Activated CD4-positive, alpha-beta T cell treated with anti-CD3 and anti-CD28 coated beads, Interleukin-2, amount 10 ng/mL, durations not matched to agents 7 days and 5 days (primary cell): ENCODE measurements at regions of chr5 and their contacts with region 1.

Region 1: GRCh38 chr5:62284946-62285891 is 20.8 kb upstream of the KIF2A start:
- DNase-seq: peak; percentile 49
- H3K4me3 Mint-ChIP-seq: no peak overlapping the region
- H3K27ac Mint-ChIP-seq: peak overlapping the region; percentile 90
- H3K4me1 Mint-ChIP-seq: peaks cover 69% of the 10 kb centered on the region
- H3K27me3 Mint-ChIP-seq: no peaks in the 10 kb centered on the region

Region 2: GRCh38 chr5:62167561-62168070 is 117.6 kb before region 1 on chr5:
- CTCF ChIA-PET with region 1: no interaction called
- POLR2A ChIA-PET with region 1: no interaction called
- DNase-seq: no peak
- H3K4me3 Mint-ChIP-seq: no peak overlapping the region
- H3K27ac Mint-ChIP-seq: no peak overlapping the region
- H3K4me1 Mint-ChIP-seq: no peaks in the 10 kb centered on the region
- H3K27me3 Mint-ChIP-seq: peaks cover 2% of the 10 kb centered on the region

Region 3: GRCh38 chr5:62273687-62274086 is 11.5 kb before region 1 on chr5:
- CTCF ChIA-PET with region 1: interaction called, 12 read pairs
- POLR2A ChIA-PET with region 1: no interaction called
- DNase-seq: no peak
- H3K4me3 Mint-ChIP-seq: no peak overlapping the region
- H3K27ac Mint-ChIP-seq: no peak overlapping the region
- H3K4me1 Mint-ChIP-seq: peaks cover 31% of the 10 kb centered on the region
- H3K27me3 Mint-ChIP-seq: no peaks in the 10 kb centered on the region

Region 4: DNA sequence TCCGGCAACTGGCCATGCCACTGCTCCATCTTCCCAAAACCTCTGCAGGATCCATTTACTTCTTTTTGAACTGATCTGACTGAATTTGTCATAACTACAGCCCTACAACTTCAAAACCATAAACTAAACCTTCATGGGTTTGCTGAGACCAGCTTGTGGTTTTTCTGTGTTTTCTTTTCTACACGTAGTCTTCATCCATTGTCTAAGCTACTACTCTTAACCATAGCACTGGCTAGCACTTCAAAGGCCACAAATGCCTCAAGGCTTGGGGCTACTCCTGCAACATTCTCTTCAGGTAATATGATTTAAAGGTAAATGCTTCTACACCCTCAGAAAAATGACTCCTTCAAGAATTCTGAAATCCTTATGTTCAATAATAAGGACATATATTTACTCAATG is 11.8 kb after region 1 on chr5:
- CTCF ChIA-PET with region 1: interaction called, 27 read pairs
- POLR2A ChIA-PET with region 1: interaction called, 6 read pairs
- DNase-seq: peak; percentile 53
- H3K4me3 Mint-ChIP-seq: peak overlapping the region; percentile 26
- H3K27ac Mint-ChIP-seq: peak overlapping the region; percentile 6
- H3K4me1 Mint-ChIP-seq: peaks cover 71% of the 10 kb centered on the region
- H3K27me3 Mint-ChIP-seq: peaks cover 6% of the 10 kb centered on the region

Region 5: GRCh38 chr5:62305715-62306322 is 20.6 kb after region 1 on chr5 and contains the start of gene KIF2A:
- CTCF ChIA-PET with region 1: interaction called, 27 read pairs
- POLR2A ChIA-PET with region 1: interaction called, 12 read pairs
- DNase-seq: peak; percentile 95
- H3K4me3 Mint-ChIP-seq: peak within 1 kb of the TSS; percentile 95
- H3K27ac Mint-ChIP-seq: peak within 1 kb of the TSS; percentile 97
- H3K4me1 Mint-ChIP-seq: peaks cover 62% of the 10 kb centered on the region
- H3K27me3 Mint-ChIP-seq: no peaks in the 10 kb centered on the region
- total RNA-seq, gene KIF2A: 151 to 204 TPM

Region 6: DNA sequence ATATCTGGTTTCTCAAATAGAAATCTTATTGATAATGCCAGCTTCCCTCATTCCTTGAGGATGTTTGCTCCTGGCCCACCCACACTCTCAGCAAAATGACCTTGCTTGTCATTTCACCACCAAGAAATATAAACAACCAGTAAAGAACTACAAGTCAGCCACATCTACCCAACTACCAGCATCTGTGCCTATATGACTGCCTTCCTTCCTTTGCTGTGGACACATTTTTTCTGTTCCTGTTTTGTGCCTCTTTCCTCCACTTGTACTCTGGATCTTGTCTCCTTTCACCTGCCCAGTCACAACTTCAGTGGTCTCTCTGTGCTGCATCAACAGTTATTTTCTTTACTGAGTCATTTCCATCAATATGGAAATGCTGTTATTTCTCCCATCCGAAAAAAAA is 41.1 kb after region 1 on chr5:
- CTCF ChIA-PET with region 1: no interaction called
- POLR2A ChIA-PET with region 1: no interaction called
- DNase-seq: no peak
- H3K4me3 Mint-ChIP-seq: no peak overlapping the region
- H3K27ac Mint-ChIP-seq: peak overlapping the region; percentile 39
- H3K4me1 Mint-ChIP-seq: peaks cover 60% of the 10 kb centered on the region
- H3K27me3 Mint-ChIP-seq: no peaks in the 10 kb centered on the region

Region 7: DNA sequence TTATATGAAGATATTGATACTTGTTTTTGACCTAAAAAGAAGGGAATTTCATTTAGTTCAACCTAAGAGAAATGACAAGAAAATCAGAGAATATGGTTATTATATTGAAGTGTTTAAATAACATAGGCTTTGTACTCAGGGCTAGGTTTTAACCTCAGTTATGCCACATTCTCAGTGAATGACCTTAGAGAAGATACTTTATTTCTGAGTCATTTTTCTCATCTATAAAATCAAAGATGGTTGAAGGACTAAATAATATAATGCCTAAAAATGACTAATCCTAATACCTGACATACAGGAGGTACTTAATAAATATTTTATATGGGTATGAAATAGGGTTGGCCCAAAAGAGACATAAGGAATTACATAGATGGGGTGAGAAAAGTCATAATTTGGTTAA is 86.2 kb after region 1 on chr5:
- CTCF ChIA-PET with region 1: no interaction called
- POLR2A ChIA-PET with region 1: no interaction called
- DNase-seq: no peak
- H3K4me3 Mint-ChIP-seq: no peak overlapping the region
- H3K27ac Mint-ChIP-seq: no peak overlapping the region
- H3K4me1 Mint-ChIP-seq: peaks cover 2% of the 10 kb centered on the region
- H3K27me3 Mint-ChIP-seq: no peaks in the 10 kb centered on the region

Region 8: GRCh38 chr5:62661126-62661525 is 375.9 kb after region 1 on chr5:
- CTCF ChIA-PET with region 1: no interaction called
- POLR2A ChIA-PET with region 1: no interaction called
- DNase-seq: no peak
- H3K4me3 Mint-ChIP-seq: no peak overlapping the region
- H3K27ac Mint-ChIP-seq: no peak overlapping the region
- H3K4me1 Mint-ChIP-seq: no peaks in the 10 kb centered on the region
- H3K27me3 Mint-ChIP-seq: peaks cover 4% of the 10 kb centered on the region